GM12878 (cell line): ENCODE measurements at regions of chr1 and their contacts with region 1.

Region 1: DNA sequence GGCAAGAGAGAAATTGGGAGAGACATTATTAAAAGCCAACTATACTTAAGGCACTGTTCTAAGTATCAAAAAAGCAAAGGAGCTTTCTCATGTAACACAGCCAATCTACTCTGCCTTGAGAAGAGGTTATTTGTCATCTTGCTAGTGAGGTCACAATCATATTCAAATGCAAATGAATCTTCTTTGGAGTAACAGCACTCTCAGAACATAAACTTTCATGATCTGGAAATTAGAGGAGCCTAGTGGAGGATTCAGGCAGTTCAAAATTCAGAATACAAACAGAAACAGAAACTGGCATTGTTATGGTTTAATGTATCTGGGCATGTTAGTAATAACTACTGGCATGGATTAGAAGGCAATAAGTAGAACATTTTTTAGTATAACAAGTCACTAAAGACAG is 57.4 kb downstream of the ARID4B start:
- DNase-seq: no peak
- ATAC-seq: peak; percentile 76
- H3K4me3 ChIP-seq: no peak overlapping the region
- H3K27ac ChIP-seq: peak overlapping the region; percentile 22; the same call in 1 of the 2 replicates
- H3K4me1 ChIP-seq: peaks cover 7% of the 10 kb centered on the region
- H3K27me3 ChIP-seq: no peaks in the 10 kb centered on the region
- CTCF ChIP-seq: no peak
- EP300 ChIP-seq: no peak
- POLR2A ChIP-seq: no peak
- RAD21 ChIP-seq: no peak

Region 2: GRCh38 chr1:235206533-235207208 is 64.0 kb before region 1 on chr1:
- CTCF ChIA-PET with region 1: no interaction called
- POLR2A ChIA-PET with region 1: no interaction called
- RAD21 ChIA-PET with region 1: no interaction called
- SMC1A ChIA-PET with region 1: no interaction called
- in situ Hi-C with region 1: no loop called
- intact Hi-C with region 1: no loop called
- DNase-seq: no peak
- ATAC-seq: peak; percentile 67
- H3K4me3 ChIP-seq: no peak overlapping the region
- H3K27ac ChIP-seq: no peak overlapping the region
- H3K4me1 ChIP-seq: no peaks in the 10 kb centered on the region
- H3K27me3 ChIP-seq: no peaks in the 10 kb centered on the region
- CTCF ChIP-seq: no peak
- EP300 ChIP-seq: no peak
- POLR2A ChIP-seq: no peak
- RAD21 ChIP-seq: no peak

Region 3: DNA sequence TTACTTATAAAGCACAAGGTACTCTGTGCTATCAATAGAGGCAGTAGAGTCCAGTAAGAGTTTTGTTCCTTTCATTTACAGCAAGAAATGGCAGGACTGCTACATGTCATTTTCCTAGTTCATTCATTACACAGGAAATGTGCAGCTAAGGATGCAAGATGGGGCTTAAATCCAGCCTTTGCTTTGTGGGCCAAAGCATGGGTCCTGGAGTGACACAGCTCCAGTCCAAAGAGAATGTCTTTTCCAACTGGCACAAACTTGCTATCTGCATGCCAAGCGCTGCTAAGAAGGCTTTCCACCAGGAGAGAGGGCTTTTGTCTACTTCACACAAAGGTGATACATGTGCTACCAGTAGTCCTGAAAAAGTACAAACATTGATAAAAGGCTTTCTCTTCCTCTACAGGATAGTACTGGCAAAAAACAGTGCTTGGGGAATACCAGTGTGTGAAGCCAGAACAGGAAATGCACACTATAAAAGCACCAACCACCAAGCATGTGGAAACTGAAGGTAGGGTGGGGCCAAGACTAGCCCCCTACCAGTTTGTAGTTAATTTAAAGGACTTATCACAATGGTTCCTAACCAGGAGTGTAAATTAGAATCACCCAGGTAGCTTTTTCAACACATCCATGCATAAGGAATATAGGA is 11.4 kb before region 1 on chr1:
- CTCF ChIA-PET with region 1: interaction called, 10 read pairs
- POLR2A ChIA-PET with region 1: interaction called, 17 read pairs
- RAD21 ChIA-PET with region 1: interaction called, 11 read pairs
- SMC1A ChIA-PET with region 1: interaction called, 86 read pairs
- in situ Hi-C with region 1: no loop called
- intact Hi-C with region 1: no loop called
- DNase-seq: peak; percentile 38
- ATAC-seq: peak; percentile 90
- H3K4me3 ChIP-seq: no peak overlapping the region
- H3K27ac ChIP-seq: peak overlapping the region; percentile 74
- H3K4me1 ChIP-seq: peaks cover 14% of the 10 kb centered on the region
- H3K27me3 ChIP-seq: no peaks in the 10 kb centered on the region
- CTCF ChIP-seq: no peak
- EP300 ChIP-seq: no peak
- POLR2A ChIP-seq: no peak
- RAD21 ChIP-seq: peak; percentile 28; the same call in 1 of the 2 replicates

Region 4: GRCh38 chr1:235291599-235292091 is 21.0 kb after region 1 on chr1:
- CTCF ChIA-PET with region 1: interaction called, 3 read pairs
- POLR2A ChIA-PET with region 1: interaction called, 3 read pairs
- RAD21 ChIA-PET with region 1: no interaction called
- SMC1A ChIA-PET with region 1: interaction called, 10 read pairs
- in situ Hi-C with region 1: no loop called
- intact Hi-C with region 1: no loop called
- DNase-seq: no peak
- ATAC-seq: peak; percentile 46
- H3K4me3 ChIP-seq: no peak overlapping the region
- H3K27ac ChIP-seq: no peak overlapping the region
- H3K4me1 ChIP-seq: no peaks in the 10 kb centered on the region; the same call in 1 of the 2 replicates
- H3K27me3 ChIP-seq: no peaks in the 10 kb centered on the region
- CTCF ChIP-seq: no peak
- EP300 ChIP-seq: no peak
- POLR2A ChIP-seq: no peak
- RAD21 ChIP-seq: no peak

Region 5: GRCh38 chr1:235532360-235532759 is 261.7 kb after region 1 on chr1:
- CTCF ChIA-PET with region 1: no interaction called
- POLR2A ChIA-PET with region 1: interaction called, 10 read pairs
- RAD21 ChIA-PET with region 1: no interaction called
- SMC1A ChIA-PET with region 1: no interaction called
- in situ Hi-C with region 1: no loop called
- intact Hi-C with region 1: no loop called
- DNase-seq: no peak
- ATAC-seq: no peak
- H3K4me3 ChIP-seq: no peak overlapping the region
- H3K27ac ChIP-seq: no peak overlapping the region
- H3K4me1 ChIP-seq: no peaks in the 10 kb centered on the region
- H3K27me3 ChIP-seq: 0 out of 4 replicates have a peak, but pooled peaks cover 0 to 3% of the 10 kb centered on the region in 2 experiments
- CTCF ChIP-seq: no peak
- EP300 ChIP-seq: no peak
- POLR2A ChIP-seq: no peak
- RAD21 ChIP-seq: no peak

Region 6: DNA sequence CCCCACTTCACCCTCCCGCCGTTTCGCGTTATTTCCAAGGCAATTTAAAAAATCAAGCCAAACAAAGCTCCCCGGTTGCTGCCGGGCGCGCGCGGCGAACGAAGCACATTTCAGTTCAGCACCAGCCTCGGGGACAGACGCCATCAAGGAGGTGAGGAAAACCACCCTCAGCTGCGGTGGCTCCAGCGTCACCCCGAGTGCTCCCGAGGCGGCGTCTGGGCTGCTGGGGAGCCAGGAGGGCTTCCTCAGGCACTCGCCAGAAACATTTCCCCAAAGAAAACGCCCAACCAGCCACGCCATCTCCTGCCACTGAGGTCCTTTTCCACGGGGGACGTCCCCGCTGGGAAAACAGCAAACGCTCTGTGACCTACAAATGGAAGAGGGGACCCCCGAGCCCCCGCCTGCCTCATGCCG is 378.3 kb after region 1 on chr1:
- CTCF ChIA-PET with region 1: no interaction called
- POLR2A ChIA-PET with region 1: no interaction called
- RAD21 ChIA-PET with region 1: no interaction called
- SMC1A ChIA-PET with region 1: no interaction called
- in situ Hi-C with region 1: no loop called
- intact Hi-C with region 1: no loop called
- DNase-seq: no peak
- ATAC-seq: peak; percentile 82
- H3K4me3 ChIP-seq: peak overlapping the region; percentile 63; the same call in 1 of the 2 replicates
- H3K27ac ChIP-seq: no peak overlapping the region
- H3K4me1 ChIP-seq: no peaks in the 10 kb centered on the region; the same call in 1 of the 2 replicates
- H3K27me3 ChIP-seq: peaks cover 1 to 19% of the 10 kb centered on the region in 2 experiments; a peak in 3 of 4 replicates
- CTCF ChIP-seq: no peak
- EP300 ChIP-seq: no peak
- POLR2A ChIP-seq: no peak
- RAD21 ChIP-seq: no peak